Prostate gland (tissue), 2 donors: ENCODE measurements at regions of chr6 and their contacts with region 1.

Region 1: GRCh38 chr6:149565527-149566409 is at the start of gene GINM1:
- DNase-seq: peak; percentile 90
- H3K4me3 ChIP-seq: peak within 1 kb of the TSS; percentile 79 to 94
- H3K27ac ChIP-seq: peak within 1 kb of the TSS; percentile 88 to 92
- H3K4me1 ChIP-seq: no peaks in the 10 kb centered on the region
- H3K27me3 ChIP-seq: no peaks in the 10 kb centered on the region
- CTCF ChIP-seq: peak in 3 of 4 experiments; percentile 44 to 68 (median 64)
- POLR2A ChIP-seq: no peak
- total RNA-seq, gene GINM1: 43.6 to 44.7 TPM

Region 2: GRCh38 chr6:149306967-149307366 is 258.8 kb before region 1 on chr6:
- intact Hi-C with region 1: no loop called
- DNase-seq: no peak
- H3K4me3 ChIP-seq: no peak overlapping the region
- H3K27ac ChIP-seq: no peak overlapping the region
- H3K4me1 ChIP-seq: no peaks in the 10 kb centered on the region
- H3K27me3 ChIP-seq: no peaks in the 10 kb centered on the region
- CTCF ChIP-seq: no peak
- POLR2A ChIP-seq: no peak

Region 3: DNA sequence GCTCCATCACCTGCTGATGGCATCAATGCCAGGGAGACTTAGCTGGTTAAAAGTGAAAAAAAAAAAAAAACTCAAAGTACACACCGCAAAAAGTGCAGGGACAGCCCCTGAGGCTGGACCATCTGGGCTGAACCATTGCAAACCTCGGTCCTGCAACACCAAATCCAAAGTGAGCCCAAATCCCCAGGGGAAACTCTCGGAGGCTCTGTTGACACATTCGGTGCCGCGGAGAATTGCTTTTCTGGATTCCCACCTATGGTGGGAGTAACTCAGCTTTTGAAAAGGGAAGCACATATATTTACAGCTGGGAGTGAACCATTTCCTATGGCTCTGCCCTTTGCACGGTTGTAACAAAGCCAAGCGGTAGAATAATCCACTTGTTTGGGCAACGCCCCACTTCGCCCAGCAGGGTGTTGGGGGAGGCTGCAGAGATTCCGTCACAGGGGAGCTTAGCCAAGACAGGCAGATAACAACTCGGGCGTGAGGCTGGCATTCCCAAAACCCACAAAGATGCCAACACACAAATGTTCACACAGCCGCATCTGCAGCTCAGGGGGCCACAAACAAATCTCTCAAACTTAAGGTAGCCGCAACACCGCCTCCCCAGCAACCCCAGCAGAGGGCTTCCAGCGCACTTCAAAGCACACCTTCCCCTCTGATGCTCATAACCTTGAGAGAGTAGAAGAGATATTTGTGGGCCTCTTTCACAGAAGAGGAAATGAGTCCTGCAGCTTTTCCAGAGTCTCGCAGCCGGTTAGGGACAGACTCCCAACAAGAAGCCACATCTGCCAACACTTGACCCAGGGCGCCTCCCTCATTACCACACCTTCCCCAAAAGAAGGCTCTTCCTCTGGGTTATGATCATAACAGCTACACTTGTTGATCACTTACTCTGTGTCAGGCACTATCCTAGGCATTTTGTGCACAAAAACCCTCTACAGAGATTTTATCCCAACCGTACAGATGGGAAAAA is 92.4 kb before region 1 on chr6:
- intact Hi-C with region 1: no loop called
- DNase-seq: no peak
- H3K4me3 ChIP-seq: no peak overlapping the region
- H3K27ac ChIP-seq: no peak overlapping the region
- H3K4me1 ChIP-seq: no peaks in the 10 kb centered on the region
- H3K27me3 ChIP-seq: no peaks in the 10 kb centered on the region
- CTCF ChIP-seq: no peak
- POLR2A ChIP-seq: no peak

Region 4: GRCh38 chr6:149648148-149649145 is 82.7 kb after region 1 on chr6 and contains the start of gene KATNA1:
- intact Hi-C with region 1: loop called (anchors 10 kb)
- DNase-seq: peak; percentile 78
- H3K4me3 ChIP-seq: peak within 1 kb of the TSS; percentile 76 to 77
- H3K27ac ChIP-seq: peak within 1 kb of the TSS; percentile 82 to 87
- H3K4me1 ChIP-seq: no peaks in the 10 kb centered on the region
- H3K27me3 ChIP-seq: no peaks in the 10 kb centered on the region
- CTCF ChIP-seq: peak in 2 of 4 experiments; percentile 14 to 25
- POLR2A ChIP-seq: peak; percentile 77
- total RNA-seq, gene KATNA1: 12.8 to 25.2 TPM

Region 5: GRCh38 chr6:149717588-149718458 is 152.1 kb after region 1 on chr6 and contains the start of gene LATS1:
- intact Hi-C with region 1: loop called (anchors 10 kb)
- DNase-seq: peak; percentile 87
- H3K4me3 ChIP-seq: peak within 1 kb of the TSS; percentile 77 to 95
- H3K27ac ChIP-seq: peak within 1 kb of the TSS; percentile 97 to 99
- H3K4me1 ChIP-seq: peaks cover 6% of the 10 kb centered on the region
- H3K27me3 ChIP-seq: no peaks in the 10 kb centered on the region
- CTCF ChIP-seq: no peak
- POLR2A ChIP-seq: peak; percentile 65
- total RNA-seq, gene LATS1: 28.7 to 44.8 TPM

Region 6: GRCh38 chr6:149863697-149864577 is 298.2 kb after region 1 on chr6 and contains the start of gene LRP11:
- intact Hi-C with region 1: loop called (anchors 10 kb)
- DNase-seq: peak; percentile 93
- H3K4me3 ChIP-seq: peak within 1 kb of the TSS; percentile 68 to 75
- H3K27ac ChIP-seq: peak within 1 kb of the TSS; percentile 86 to 95
- H3K4me1 ChIP-seq: peaks cover 4% of the 10 kb centered on the region
- H3K27me3 ChIP-seq: no peaks in the 10 kb centered on the region
- CTCF ChIP-seq: peak in 2 of 4 experiments; percentile 6 to 9
- POLR2A ChIP-seq: peak; percentile 90
- total RNA-seq, gene LRP11: 52.7 to 76.3 TPM

Region 7: GRCh38 chr6:149925974-149926777 is 360.4 kb after region 1 on chr6:
- intact Hi-C with region 1: loop called (anchors 10 kb)
- DNase-seq: peak; percentile 90
- H3K4me3 ChIP-seq: peak overlapping the region; percentile 39 to 41
- H3K27ac ChIP-seq: peak overlapping the region; percentile 35 to 52
- H3K4me1 ChIP-seq: no peaks in the 10 kb centered on the region
- H3K27me3 ChIP-seq: no peaks in the 10 kb centered on the region
- CTCF ChIP-seq: peak; percentile 74 to 96 (median 88)
- POLR2A ChIP-seq: no peak